Right ventricle myocardium superior (tissue), 1 donor: ENCODE measurements at regions of chr6 and their contacts with region 1.

Region 1: DNA sequence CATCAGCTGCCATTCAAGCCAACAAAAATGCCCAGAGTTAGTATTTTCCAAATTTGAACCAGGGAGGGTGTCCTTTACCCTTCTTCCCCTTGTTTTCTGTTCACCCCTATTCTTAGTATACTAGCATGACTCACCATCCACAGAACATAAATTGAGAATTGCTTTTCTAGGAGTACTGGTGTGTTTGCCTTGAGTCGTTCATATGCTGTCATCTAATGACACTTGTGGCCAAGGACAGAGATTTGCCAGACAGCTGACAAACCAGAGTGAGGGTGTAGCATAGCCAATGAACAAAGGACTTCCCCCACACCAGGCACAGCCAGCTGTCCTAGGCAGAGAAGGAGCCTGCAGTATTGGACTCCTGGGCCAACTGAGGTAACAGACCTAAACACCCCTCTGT is 62.2 kb downstream of the FILIP1 start:
- DNase-seq: peak; percentile 47
- ATAC-seq: peak; percentile 86

Region 2: DNA sequence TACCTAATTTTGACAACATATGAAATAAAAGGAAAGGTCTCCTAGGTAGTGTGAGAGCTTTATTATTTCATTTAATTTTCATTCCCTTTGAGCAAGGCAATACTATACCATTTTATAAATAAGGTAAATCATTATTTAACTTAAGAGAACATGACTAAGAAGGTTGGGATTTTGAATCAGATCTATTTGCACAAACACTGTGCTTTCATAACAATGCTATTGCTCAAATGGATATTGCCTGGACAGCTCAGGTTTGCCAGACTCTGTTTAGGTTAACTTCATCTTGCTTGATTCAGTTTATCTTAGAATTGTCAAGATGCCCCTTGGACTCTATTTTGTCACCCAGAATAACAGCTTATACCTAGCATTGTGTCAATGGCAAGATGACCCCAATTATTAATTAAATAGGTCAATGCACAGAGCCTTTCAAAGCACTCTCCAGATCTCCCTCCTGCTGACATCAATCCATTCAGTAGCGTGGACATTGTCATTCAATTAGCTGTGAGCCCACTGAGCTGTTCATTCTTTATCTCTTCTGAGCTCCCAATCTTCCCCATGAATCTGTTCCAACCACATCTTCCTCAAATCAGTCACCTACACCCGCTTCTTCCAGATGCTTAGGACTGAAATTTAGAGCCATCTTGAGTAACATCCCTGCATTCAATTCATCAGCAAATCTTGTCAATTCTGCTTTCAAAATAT is 104.7 kb before region 1 on chr6:
- intact Hi-C with region 1: no loop called
- DNase-seq: no peak
- ATAC-seq: no peak

Region 3: DNA sequence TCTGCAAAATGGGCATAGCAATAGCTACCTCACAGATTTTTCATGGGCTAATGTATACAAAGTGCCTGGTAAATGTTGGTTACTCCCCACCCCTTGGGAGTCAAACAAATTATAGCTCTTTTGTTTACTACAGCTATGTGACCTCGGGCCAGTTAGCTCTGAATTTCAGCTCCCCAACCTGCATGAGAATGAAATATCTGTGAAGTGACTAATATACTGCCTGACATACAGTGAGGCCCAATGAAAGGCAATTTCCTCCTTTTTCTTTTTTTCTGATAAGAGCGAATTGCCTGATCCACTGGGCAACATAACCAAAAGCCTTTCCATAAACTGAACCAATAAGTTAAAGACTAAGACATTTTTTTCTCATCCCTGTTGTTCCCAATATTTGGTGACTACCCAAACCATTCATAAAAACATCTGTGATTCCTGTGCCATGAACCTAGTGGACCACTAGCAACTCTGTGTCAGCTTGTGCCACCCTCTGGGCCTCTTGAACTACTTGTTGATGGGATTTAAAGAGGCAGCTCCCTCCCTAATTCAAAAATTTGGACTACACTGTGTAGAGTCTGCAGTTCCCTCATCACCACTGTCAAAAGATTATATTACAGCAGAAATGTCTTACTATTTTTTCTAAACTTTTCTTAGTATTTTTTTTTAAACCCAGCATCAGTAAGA is 54.9 kb before region 1 on chr6:
- intact Hi-C with region 1: loop called (anchors 10 kb)
- DNase-seq: no peak
- ATAC-seq: no peak